ENCODE measurements at regions of chr1 and their contacts with region 1.

Region 1: GRCh38 chr1:1281533-1282321 is 1.5 kb downstream of the SCNN1D start:
- DNase-seq: peak; percentile 91
- ATAC-seq: peak; percentile 80
- H3K4me3 ChIP-seq: no peak overlapping the region
- H3K27ac ChIP-seq: no peak overlapping the region
- H3K4me1 ChIP-seq: no peaks in the 10 kb centered on the region
- H3K27me3 ChIP-seq: peaks cover 9% of the 10 kb centered on the region
- CTCF ChIP-seq: no peak

Region 2: DNA sequence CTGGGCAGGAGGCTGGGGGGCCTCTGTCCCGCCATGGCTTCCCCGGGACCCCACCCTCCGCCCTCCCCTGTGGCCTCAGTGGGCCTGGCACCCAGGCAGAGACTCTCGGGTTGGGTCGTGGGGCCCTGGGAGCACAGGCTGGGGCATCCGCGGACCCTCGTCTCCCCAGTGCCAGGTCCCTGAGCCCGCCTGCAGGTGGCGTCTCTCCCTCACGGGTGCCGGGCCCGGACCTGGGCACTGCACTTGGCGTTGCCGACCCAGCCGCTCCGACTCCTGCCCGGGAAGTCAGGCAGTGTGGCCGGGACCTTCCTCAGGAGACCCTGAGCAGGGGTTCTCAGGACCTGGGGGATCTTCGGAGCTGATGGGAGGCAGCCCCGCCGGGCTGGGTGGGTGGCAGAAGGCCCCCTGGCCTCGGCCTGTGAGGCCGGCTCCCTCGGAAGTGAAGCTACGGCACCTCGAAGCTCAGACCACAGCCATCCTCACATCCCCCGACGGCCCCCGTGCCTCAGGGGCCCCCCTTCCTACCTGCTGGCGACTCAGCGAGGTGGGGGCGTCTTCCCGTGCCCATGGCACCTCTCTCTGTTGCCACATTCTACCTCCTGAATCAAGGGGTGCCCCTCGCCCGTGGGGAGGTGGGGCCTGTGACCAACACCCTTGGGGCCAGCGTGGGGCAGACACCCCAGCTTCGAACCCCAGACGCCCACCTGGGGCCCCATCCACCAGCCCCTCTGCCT is 159.5 kb before region 1 on chr1:
- intact Hi-C with region 1: loop called (anchors 10 kb)
- DNase-seq: peak; percentile 93
- ATAC-seq: peak; percentile 90
- H3K4me3 ChIP-seq: peak overlapping the region; percentile 31
- H3K27ac ChIP-seq: no peak overlapping the region
- H3K4me1 ChIP-seq: peaks cover 5% of the 10 kb centered on the region
- H3K27me3 ChIP-seq: peaks cover 13% of the 10 kb centered on the region
- CTCF ChIP-seq: peak; percentile 87